A673 (cell line): ENCODE measurements at regions of chr1 and their contacts with region 1.

Region 1: DNA sequence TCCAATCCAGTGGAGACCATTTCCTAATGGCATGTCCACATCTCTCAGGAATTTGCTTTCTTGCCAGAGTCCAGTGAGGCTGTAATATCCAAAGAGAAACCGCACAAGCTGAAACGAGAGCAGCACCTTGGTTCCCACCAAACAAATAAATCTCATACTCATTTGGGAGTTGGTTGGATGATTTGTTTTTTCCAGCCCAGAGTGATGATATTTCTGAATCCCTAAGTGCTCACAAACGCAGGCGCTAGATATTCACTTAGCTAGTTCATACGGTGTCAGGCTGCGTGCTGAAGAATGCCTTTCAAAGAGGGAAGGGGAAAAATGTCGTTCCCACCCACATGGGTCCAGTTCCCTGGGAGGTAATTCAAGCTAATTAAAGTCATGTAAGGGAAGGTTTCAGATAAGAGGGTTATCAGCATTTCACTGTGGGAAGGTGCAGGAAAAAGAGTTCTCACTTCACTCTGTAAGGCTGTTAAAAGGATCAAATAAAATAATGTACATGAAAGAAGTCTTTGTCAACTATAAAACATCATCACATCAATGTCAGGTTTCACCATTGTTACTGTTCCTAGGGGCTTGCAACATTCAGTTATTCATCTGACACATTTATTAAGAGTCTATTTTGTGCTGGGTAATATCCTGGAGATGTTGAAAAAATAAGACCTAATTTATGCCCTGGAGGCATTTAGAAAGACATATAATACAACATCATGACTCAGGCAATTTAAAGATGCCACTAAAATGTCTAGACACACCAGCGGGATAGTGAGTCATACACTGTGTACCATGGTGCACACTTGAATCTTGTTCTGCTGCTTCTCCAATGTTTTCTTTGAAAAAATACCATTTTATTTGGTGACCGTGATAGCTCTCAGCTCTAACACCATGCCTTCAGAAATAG is 19.4 kb downstream of the DPT start:
- DNase-seq: peak; percentile 84
- H3K4me3 ChIP-seq: no peak overlapping the region
- H3K27ac ChIP-seq: no peak overlapping the region
- H3K4me1 ChIP-seq: peaks cover 6% of the 10 kb centered on the region
- H3K27me3 ChIP-seq: no peaks in the 10 kb centered on the region
- CTCF ChIP-seq: no peak

Region 2: DNA sequence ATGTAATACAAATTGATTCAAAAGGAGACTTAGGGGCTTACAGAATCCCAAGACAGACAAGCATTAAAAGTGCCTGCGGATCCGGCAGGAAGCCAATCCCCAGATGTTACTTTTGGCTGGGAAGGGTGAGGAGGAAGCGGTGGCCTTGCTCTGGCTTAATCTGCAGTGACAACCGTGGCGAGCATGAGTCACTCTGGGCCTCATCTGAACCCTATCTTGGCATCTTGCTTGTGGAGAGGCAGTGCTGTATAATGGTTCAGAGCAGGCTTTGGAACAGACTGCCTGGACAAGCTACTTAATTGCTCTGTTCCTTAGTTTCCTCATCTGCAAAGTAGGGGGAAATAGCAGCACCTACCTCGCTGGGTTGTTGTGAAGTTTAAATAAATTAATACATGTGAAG is 240.0 kb before region 1 on chr1:
- CTCF ChIA-PET with region 1: no interaction called
- POLR2A ChIA-PET with region 1: no interaction called
- intact Hi-C with region 1: no loop called
- DNase-seq: peak; percentile 93
- H3K4me3 ChIP-seq: no peak overlapping the region
- H3K27ac ChIP-seq: peak overlapping the region; percentile 66
- H3K4me1 ChIP-seq: peaks cover 56% of the 10 kb centered on the region
- H3K27me3 ChIP-seq: no peaks in the 10 kb centered on the region
- CTCF ChIP-seq: no peak

Region 3: GRCh38 chr1:168623003-168623828 is 86.4 kb before region 1 on chr1:
- CTCF ChIA-PET with region 1: no interaction called
- POLR2A ChIA-PET with region 1: no interaction called
- intact Hi-C with region 1: no loop called
- DNase-seq: peak; percentile 22
- H3K4me3 ChIP-seq: no peak overlapping the region
- H3K27ac ChIP-seq: no peak overlapping the region
- H3K4me1 ChIP-seq: no peaks in the 10 kb centered on the region
- H3K27me3 ChIP-seq: no peaks in the 10 kb centered on the region
- CTCF ChIP-seq: no peak

Region 4: GRCh38 chr1:168811176-168811575 is 101.5 kb after region 1 on chr1:
- CTCF ChIA-PET with region 1: no interaction called
- POLR2A ChIA-PET with region 1: no interaction called
- intact Hi-C with region 1: loop called (anchors 5 kb)
- DNase-seq: no peak
- H3K4me3 ChIP-seq: no peak overlapping the region
- H3K27ac ChIP-seq: no peak overlapping the region
- H3K4me1 ChIP-seq: no peaks in the 10 kb centered on the region
- H3K27me3 ChIP-seq: no peaks in the 10 kb centered on the region
- CTCF ChIP-seq: no peak